PC-9 (cell line): ENCODE measurements at regions of chr7 and their contacts with region 1.

Region 1: DNA sequence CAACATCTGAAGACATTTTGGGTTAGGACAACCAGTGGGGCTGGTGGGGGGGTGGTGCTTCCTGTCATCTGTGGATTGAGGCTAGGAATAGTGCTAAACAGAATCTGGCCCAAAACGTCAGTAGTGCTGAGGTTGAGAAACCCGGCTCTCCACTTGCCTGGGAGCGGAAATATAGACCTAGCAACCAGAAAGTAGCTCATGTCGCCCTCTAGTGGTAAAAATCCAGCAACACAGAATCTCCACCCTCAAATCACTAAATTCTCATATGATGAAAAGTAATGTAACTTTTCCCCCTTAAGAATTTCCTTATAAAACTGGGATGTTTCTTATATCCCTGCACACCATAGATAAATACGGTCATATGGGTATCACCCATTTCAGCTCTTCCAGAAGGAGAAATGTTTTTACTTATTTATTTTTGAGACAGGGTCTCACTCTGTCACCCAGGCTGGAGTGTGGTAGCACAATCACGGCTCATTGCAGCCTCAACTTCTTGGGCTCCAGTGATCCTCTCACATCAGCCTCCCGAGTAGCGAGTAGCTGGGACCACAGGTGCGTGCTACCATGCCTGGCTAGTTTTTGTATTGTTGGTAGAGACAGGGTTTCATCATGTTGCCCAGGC is 34.4 kb downstream of the ZC3HAV1 start:
- DNase-seq: peak; percentile 55 to 61
- H3K4me3 ChIP-seq: no peak overlapping the region
- H3K27ac ChIP-seq: peak overlapping the region; percentile 25; the same call in 1 of the 2 replicates
- H3K4me1 ChIP-seq: no peaks in the 10 kb centered on the region; the same call in 1 of the 2 replicates
- H3K27me3 ChIP-seq: no peaks in the 10 kb centered on the region
- CTCF ChIP-seq: peak; percentile 93

Region 2: GRCh38 chr7:138002096-138002827 is 1072.9 kb before region 1 on chr7:
- CTCF ChIA-PET with region 1: no interaction called
- POLR2A ChIA-PET with region 1: no interaction called
- intact Hi-C with region 1: loop called (anchors 10 kb)
- DNase-seq: peak; percentile 99 to 100
- H3K4me3 ChIP-seq: peak overlapping the region; percentile 75
- H3K27ac ChIP-seq: peak overlapping the region; percentile 58
- H3K4me1 ChIP-seq: peaks cover 33% of the 10 kb centered on the region
- H3K27me3 ChIP-seq: no peaks in the 10 kb centered on the region
- CTCF ChIP-seq: peak; percentile 99

Region 3: DNA sequence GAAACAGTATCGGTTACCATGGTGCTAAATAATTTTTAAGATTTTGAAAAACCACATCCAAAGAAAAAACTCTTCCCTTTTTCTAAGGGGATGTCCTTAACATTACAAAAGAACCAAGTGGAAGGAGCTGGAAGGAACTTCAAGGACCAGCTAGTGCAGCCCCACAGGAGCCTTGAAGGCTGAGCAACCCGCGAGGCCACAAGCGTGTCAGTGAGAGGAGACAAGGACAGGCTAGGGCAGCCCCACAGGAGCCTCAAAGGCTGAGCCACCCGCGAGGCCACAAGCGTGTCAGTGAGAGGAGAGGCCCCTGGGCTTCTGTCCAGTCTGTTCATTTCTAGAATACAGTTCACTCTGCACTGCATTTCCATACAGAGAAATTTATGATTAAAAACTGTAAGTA is 197.1 kb before region 1 on chr7:
- CTCF ChIA-PET with region 1: no interaction called
- POLR2A ChIA-PET with region 1: interaction called, 17 read pairs
- intact Hi-C with region 1: no loop called
- DNase-seq: no peak
- H3K4me3 ChIP-seq: no peak overlapping the region
- H3K27ac ChIP-seq: no peak overlapping the region
- H3K4me1 ChIP-seq: peaks cover 29% of the 10 kb centered on the region
- H3K27me3 ChIP-seq: no peaks in the 10 kb centered on the region
- CTCF ChIP-seq: no peak

Region 4: GRCh38 chr7:138935465-138936011 is 139.6 kb before region 1 on chr7:
- CTCF ChIA-PET with region 1: no interaction called
- POLR2A ChIA-PET with region 1: interaction called, 20 read pairs
- intact Hi-C with region 1: no loop called
- DNase-seq: peak; percentile 73 to 85
- H3K4me3 ChIP-seq: no peak overlapping the region; the same call in 1 of the 2 replicates
- H3K27ac ChIP-seq: peak overlapping the region; percentile 72
- H3K4me1 ChIP-seq: peaks cover 27% of the 10 kb centered on the region
- H3K27me3 ChIP-seq: no peaks in the 10 kb centered on the region
- CTCF ChIP-seq: no peak

Region 5: GRCh38 chr7:139016931-139017511 is 58.1 kb before region 1 on chr7:
- CTCF ChIA-PET with region 1: interaction called, 11 read pairs
- POLR2A ChIA-PET with region 1: interaction called, 6 read pairs
- intact Hi-C with region 1: loop called (anchors 1 kb)
- DNase-seq: peak; percentile 51 to 56
- H3K4me3 ChIP-seq: no peak overlapping the region
- H3K27ac ChIP-seq: no peak overlapping the region
- H3K4me1 ChIP-seq: no peaks in the 10 kb centered on the region
- H3K27me3 ChIP-seq: no peaks in the 10 kb centered on the region
- CTCF ChIP-seq: peak; percentile 83

Region 6: GRCh38 chr7:139035586-139036353 is 39.4 kb before region 1 on chr7 and contains the start of gene ZC3HAV1L:
- CTCF ChIA-PET with region 1: no interaction called
- POLR2A ChIA-PET with region 1: no interaction called
- intact Hi-C with region 1: loop called (anchors 1 kb)
- DNase-seq: peak; percentile 47 to 83
- H3K4me3 ChIP-seq: peak within 1 kb of the TSS; percentile 95
- H3K27ac ChIP-seq: peak within 1 kb of the TSS; percentile 56
- H3K4me1 ChIP-seq: peaks cover 15% of the 10 kb centered on the region
- H3K27me3 ChIP-seq: no peaks in the 10 kb centered on the region
- CTCF ChIP-seq: no peak
- total RNA-seq, gene ZC3HAV1L: 34.2 and 34.8 TPM in 2 replicates

Region 7: GRCh38 chr7:139660317-139661042 is 585.3 kb after region 1 on chr7:
- CTCF ChIA-PET with region 1: no interaction called
- POLR2A ChIA-PET with region 1: no interaction called
- intact Hi-C with region 1: no loop called
- DNase-seq: peak in 1 of 2 experiments; percentile 44
- H3K4me3 ChIP-seq: no peak overlapping the region
- H3K27ac ChIP-seq: no peak overlapping the region
- H3K4me1 ChIP-seq: no peaks in the 10 kb centered on the region
- H3K27me3 ChIP-seq: no peaks in the 10 kb centered on the region
- CTCF ChIP-seq: no peak

Region 8: DNA sequence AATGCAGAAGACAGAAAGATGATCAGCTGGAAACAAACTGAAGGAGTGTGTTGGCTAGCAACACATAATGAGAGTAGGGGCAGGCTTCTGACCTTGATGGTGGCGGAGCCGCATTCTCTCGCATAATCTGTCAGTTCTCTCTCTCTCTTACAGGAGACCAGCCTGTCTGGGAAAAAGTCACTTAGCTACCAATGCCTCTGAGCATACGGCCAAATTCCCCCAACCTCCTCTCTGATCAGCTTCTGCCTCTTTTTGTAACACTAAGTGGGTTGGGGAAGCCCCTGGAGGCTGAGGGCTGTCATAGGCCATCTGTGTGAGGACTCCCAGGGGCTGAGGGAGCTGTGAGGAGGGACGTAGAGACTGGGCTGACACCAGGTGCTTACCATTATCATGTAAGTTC is 598.1 kb after region 1 on chr7:
- CTCF ChIA-PET with region 1: no interaction called
- POLR2A ChIA-PET with region 1: no interaction called
- intact Hi-C with region 1: no loop called
- DNase-seq: no peak
- H3K4me3 ChIP-seq: no peak overlapping the region
- H3K27ac ChIP-seq: no peak overlapping the region
- H3K4me1 ChIP-seq: peaks cover 5% of the 10 kb centered on the region; the same call in 1 of the 2 replicates
- H3K27me3 ChIP-seq: no peaks in the 10 kb centered on the region
- CTCF ChIP-seq: no peak